Activated T-helper 1 cell treated with anti-CD3 and anti-CD28 coated beads, Interleukin-12 subunit alpha, Interleukin-12 subunit beta, Interleukin-2, Interleukin-4 antibody, amounts not matched to agents 30 ng/mL and 10 ng/mL and 1 ng/mL, durations not matched to agents 14 hours and 24 hours and 36 hours (primary cell): ENCODE measurements at regions of chr2 and their contacts with region 1.

Region 1: DNA sequence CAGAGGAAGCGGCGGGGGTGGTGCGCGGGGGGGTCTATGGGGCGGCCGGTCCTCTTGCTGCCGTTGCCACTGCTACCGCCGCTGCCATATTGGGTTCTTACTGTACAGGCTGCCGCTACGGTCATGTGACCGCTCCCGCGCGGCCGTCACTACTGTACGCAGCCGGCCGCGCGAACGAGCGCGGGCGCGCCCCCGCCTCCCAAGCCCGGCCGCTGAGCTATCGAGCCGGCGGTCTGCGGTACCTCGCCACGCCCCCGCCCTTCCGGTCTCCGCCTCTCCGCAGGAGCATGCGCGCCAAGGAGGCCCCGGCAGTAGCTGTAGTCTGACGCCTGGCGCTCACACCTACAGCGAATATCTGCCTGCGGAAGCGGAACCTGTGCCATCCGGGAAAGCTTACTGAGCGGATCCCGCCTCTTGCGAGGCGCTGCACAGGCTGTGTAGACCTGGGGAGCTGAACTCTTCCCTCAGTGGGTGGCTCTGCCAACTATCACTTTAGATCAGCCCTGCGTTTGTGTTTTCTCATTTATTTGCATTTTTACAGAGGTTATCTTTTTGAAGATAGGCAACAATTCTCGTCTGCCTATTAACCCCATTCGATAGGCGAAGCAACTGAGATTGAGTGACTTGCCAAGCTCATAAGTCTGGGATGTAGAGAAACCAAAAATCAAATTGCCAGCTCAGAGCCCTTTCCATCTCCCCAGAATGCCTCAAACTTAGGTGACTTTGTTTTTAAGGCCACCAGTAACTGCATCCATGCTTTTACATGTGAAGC is at the start of gene ASXL2:
- DNase-seq: peak; percentile 98
- H3K4me3 Mint-ChIP-seq: peak within 1 kb of the TSS; percentile 90
- H3K27ac Mint-ChIP-seq: peak within 1 kb of the TSS; percentile 96
- H3K4me1 Mint-ChIP-seq: peaks cover 51% of the 10 kb centered on the region
- H3K27me3 Mint-ChIP-seq: peaks cover 5% of the 10 kb centered on the region
- total RNA-seq, gene ASXL2: 48.9 and 54.4 TPM in 2 replicates

Region 2: GRCh38 chr2:24490674-24491625 is 1387.6 kb before region 1 on chr2 and contains the start of gene NCOA1:
- intact Hi-C with region 1: loop called (anchors 5 kb)
- DNase-seq: peak; percentile 87
- H3K4me3 Mint-ChIP-seq: peak within 1 kb of the TSS; percentile 96
- H3K27ac Mint-ChIP-seq: peak within 1 kb of the TSS; percentile 95
- H3K4me1 Mint-ChIP-seq: peaks cover 43% of the 10 kb centered on the region
- H3K27me3 Mint-ChIP-seq: peaks cover 7% of the 10 kb centered on the region
- total RNA-seq, gene NCOA1: 28.7 and 30.0 TPM in 2 replicates

Region 3: DNA sequence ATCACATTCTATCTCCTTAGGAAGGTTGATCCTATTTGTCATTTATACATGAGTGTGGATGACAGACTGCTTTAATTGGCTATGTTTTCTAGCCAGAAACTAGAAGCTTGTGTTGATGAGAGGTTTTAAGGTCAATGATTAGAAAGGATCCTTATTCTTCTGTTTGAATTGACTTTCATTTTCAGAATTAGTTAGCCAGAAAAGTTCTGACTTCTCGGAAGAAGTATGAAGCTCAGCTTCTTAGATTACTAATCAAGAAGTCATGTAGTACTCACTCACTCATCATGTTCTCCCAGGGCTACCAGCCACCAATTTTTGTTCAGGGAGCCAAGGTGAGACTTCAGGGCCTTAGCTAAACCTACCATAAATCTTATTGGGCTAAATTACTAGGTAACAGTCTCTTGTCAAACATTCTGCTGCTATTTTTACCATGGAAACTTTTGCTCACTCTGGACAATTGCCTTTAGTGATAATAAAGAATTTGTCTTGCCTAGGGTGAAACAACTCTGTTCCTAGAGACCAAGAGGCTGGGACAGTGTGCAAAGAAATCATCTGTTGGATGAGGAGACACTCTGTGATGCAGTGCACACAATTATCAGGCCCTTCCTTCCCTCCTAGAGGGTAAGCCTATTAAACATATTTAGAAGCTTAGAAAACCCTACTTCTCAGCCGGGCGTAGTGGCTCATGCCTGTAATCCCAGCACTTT is 425.2 kb before region 1 on chr2:
- intact Hi-C with region 1: loop called (anchors 1 kb)
- DNase-seq: peak; percentile 24
- H3K4me3 Mint-ChIP-seq: peak overlapping the region; percentile 51
- H3K27ac Mint-ChIP-seq: peak overlapping the region; percentile 90
- H3K4me1 Mint-ChIP-seq: peaks cover 42% of the 10 kb centered on the region
- H3K27me3 Mint-ChIP-seq: no peaks in the 10 kb centered on the region

Region 4: GRCh38 chr2:25794544-25795276 is 83.8 kb before region 1 on chr2:
- intact Hi-C with region 1: loop called (anchors 1 kb)
- DNase-seq: no peak
- H3K4me3 Mint-ChIP-seq: peak overlapping the region; percentile 87
- H3K27ac Mint-ChIP-seq: peak overlapping the region; percentile 86
- H3K4me1 Mint-ChIP-seq: peaks cover 67% of the 10 kb centered on the region
- H3K27me3 Mint-ChIP-seq: no peaks in the 10 kb centered on the region

Region 5: GRCh38 chr2:25851740-25852503 is 26.6 kb before region 1 on chr2:
- intact Hi-C with region 1: loop called (anchors 1 kb)
- DNase-seq: peak; percentile 44
- H3K4me3 Mint-ChIP-seq: peak overlapping the region; percentile 43
- H3K27ac Mint-ChIP-seq: peak overlapping the region; percentile 84
- H3K4me1 Mint-ChIP-seq: peaks cover 37% of the 10 kb centered on the region
- H3K27me3 Mint-ChIP-seq: no peaks in the 10 kb centered on the region

Region 6: GRCh38 chr2:26033818-26034636 is 155.5 kb after region 1 on chr2 and contains the start of gene RAB10:
- intact Hi-C with region 1: loop called (anchors 1 kb)
- DNase-seq: peak; percentile 100
- H3K4me3 Mint-ChIP-seq: peak within 1 kb of the TSS; percentile 94
- H3K27ac Mint-ChIP-seq: peak within 1 kb of the TSS; percentile 93
- H3K4me1 Mint-ChIP-seq: peaks cover 26% of the 10 kb centered on the region
- H3K27me3 Mint-ChIP-seq: no peaks in the 10 kb centered on the region
- total RNA-seq, gene RAB10: 128 and 130 TPM in 2 replicates

Region 7: DNA sequence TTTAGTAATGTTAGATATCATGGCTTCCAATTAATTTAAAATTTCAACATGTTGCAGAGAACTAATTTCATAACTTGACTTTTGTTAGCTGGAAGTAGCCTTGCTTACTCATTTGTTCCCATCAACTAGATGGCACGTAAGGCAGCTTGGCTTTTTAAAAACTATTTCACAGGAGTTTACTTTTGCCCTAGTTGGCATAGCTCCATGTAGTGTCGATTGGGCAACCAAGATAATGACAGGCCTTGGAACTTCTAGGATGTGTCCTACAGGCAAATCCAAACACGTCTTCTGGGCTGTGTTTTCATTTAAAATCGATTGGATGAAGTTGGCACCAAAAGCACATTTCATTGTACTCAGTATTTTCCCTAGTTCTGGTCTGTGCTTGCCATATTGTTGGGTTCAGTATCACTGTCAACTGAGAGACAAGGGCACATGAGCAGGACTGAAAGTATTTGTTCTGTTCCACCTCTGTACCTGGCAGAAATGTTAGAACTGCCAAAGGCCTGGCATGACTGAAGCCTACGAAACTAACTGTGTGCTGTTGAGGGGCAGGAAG is 395.6 kb after region 1 on chr2:
- intact Hi-C with region 1: no loop called
- DNase-seq: no peak
- H3K4me3 Mint-ChIP-seq: no peak overlapping the region
- H3K27ac Mint-ChIP-seq: no peak overlapping the region
- H3K4me1 Mint-ChIP-seq: peaks cover 11% of the 10 kb centered on the region
- H3K27me3 Mint-ChIP-seq: no peaks in the 10 kb centered on the region

Region 8: GRCh38 chr2:26345545-26346453 is 467.3 kb after region 1 on chr2 and contains the start of gene SELENOI:
- intact Hi-C with region 1: loop called (anchors 5 kb)
- DNase-seq: peak; percentile 100
- H3K4me3 Mint-ChIP-seq: peak within 1 kb of the TSS; percentile 99
- H3K27ac Mint-ChIP-seq: peak within 1 kb of the TSS; percentile 98
- H3K4me1 Mint-ChIP-seq: peaks cover 33% of the 10 kb centered on the region
- H3K27me3 Mint-ChIP-seq: no peaks in the 10 kb centered on the region
- total RNA-seq, gene SELENOI: 66.6 and 68.2 TPM in 2 replicates